ENCODE measurements at regions of chr1 and their contacts with region 1.

Region 1: DNA sequence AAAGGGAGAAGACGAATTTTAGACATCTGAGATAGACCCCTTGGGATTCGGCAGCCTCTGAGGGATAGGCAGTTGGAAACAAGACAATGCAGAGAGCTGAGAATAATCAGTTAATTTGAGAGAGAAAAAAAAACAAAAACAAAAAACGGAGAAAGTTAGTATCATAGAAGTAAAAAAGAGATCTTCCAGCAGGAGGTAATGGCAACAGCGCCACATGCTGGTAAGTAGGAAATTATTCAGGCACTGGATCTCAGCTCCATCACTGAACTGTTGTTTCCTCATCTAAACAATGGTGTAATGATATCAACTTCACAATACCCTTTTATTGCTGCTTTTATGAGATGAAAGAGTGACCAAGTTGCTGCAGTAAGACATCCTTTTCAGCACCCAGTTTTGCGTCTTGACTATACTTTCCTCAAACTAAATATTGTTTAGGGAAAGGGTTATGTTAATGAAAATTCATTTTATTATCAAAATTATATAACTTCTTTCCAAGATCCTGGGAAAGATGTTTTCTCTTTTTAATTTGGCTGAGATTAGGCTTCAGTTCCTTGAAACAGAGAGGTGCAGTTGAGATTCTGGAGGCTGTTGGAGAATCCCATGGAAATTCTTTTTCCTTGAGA is 91.4 kb upstream of the KCNA3 start:
- DNase-seq: peak in 1 of 3 donors; percentile 17
- ATAC-seq: peak; percentile 60
- H3K4me3 ChIP-seq: no peak overlapping the region
- H3K4me1 ChIP-seq: no peaks in the 10 kb centered on the region
- CTCF ChIP-seq: peak; percentile 14

Region 2: DNA sequence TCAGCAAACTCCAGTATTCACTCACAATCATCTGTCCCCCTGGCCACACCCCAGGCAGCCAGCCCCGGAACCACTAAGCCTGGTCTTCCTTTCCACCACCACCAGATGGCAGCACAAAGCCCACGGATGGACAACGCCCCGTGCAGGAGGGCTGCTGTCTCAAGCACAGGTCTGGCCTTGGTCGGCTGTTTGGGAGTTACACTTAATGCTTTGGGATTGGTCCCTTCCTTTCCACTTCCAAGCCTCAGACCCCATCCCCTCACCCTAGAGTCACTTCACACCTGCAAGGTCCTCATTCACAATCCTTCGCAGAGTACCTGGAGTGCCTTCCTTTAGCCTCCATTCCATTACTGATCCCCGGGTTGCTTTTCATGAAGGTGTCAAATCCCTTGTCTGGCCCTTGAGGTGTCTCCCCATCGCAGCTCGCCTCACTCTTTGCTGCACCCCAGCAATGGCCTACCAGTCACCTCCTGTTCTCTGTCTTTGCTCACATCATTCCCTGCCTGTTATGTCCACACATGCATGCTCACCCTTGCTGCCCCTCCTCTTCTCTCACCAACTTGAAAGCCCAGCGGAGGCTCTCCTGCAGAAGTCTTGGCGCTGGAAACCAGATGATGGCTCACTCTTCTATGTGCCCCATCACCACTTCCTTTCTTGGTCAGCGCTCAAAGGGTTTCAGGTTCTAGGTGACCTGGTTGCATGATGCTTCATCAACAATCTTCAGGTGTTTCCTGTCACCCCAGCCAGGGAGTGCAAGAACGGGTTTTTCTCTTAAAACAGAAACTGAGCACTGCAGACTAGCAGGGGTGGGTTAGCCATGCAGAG is 135.1 kb before region 1 on chr1:
- intact Hi-C with region 1: loop called in 1 of 2 experiments (anchors 5 kb)
- DNase-seq: peak; percentile 82 to 84 (median 83)
- ATAC-seq: peak; percentile 91
- H3K4me3 ChIP-seq: no peak overlapping the region
- H3K4me1 ChIP-seq: peaks cover 6% of the 10 kb centered on the region
- CTCF ChIP-seq: peak; percentile 71